PC-3 (cell line): ENCODE measurements at regions of chr11 and their contacts with region 1.

Region 1: GRCh38 chr11:33065445-33066178 is 26.2 kb downstream of the TCP11L1 start:
- DNase-seq: peak; percentile 66
- ATAC-seq: peak; percentile 88
- H3K4me3 ChIP-seq: no peak overlapping the region
- H3K27ac ChIP-seq: no peak overlapping the region
- H3K4me1 ChIP-seq: peaks cover 11% of the 10 kb centered on the region
- H3K27me3 ChIP-seq: no peaks in the 10 kb centered on the region
- CTCF ChIP-seq: peak; percentile 84

Region 2: GRCh38 chr11:32796425-32796824 is 269.2 kb before region 1 on chr11:
- CTCF ChIA-PET with region 1: no interaction called
- POLR2A ChIA-PET with region 1: no interaction called
- intact Hi-C with region 1: no loop called
- DNase-seq: peak; percentile 23
- ATAC-seq: no peak
- H3K4me3 ChIP-seq: no peak overlapping the region
- H3K27ac ChIP-seq: no peak overlapping the region
- H3K4me1 ChIP-seq: peaks cover 15% of the 10 kb centered on the region
- H3K27me3 ChIP-seq: no peaks in the 10 kb centered on the region
- CTCF ChIP-seq: no peak

Region 3: GRCh38 chr11:32893343-32894148 is 172.1 kb before region 1 on chr11:
- CTCF ChIA-PET with region 1: no interaction called
- POLR2A ChIA-PET with region 1: interaction called, 4 read pairs
- intact Hi-C with region 1: loop called (anchors 10 kb)
- DNase-seq: peak; percentile 32
- ATAC-seq: peak; percentile 37
- H3K4me3 ChIP-seq: peak overlapping the region; percentile 80
- H3K27ac ChIP-seq: peak overlapping the region; percentile 64
- H3K4me1 ChIP-seq: peaks cover 28% of the 10 kb centered on the region
- H3K27me3 ChIP-seq: no peaks in the 10 kb centered on the region
- CTCF ChIP-seq: peak; percentile 57

Region 4: DNA sequence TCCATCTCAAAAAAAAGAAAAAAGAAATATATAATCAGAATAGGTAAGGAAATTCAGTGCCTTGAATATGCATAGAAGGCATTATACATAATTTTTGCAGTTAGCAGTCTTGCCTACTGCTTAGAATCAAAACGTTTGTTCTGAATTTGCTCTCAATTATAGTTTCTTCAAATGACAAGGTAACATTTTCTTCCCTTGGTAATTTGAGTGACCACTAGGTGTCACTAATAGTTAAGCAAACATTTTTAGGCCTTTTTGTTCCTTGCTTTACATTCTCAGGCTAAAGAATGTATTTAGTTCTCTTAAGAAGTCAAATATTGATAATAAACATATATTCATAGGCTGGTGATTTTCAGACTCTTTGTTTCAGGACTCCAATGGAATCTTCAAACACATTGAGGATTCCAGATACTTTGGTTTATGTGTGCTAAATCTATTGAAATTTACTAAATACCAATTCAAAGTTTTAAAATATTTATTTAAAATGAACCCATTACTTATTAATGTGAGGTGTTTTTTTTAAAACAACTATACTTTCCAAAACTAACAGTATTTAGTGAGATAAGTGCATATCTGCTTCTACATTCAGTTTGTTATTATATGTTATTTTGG is 105.0 kb before region 1 on chr11:
- CTCF ChIA-PET with region 1: interaction called, 3 read pairs
- POLR2A ChIA-PET with region 1: no interaction called
- intact Hi-C with region 1: loop called (anchors 1 kb)
- DNase-seq: peak; percentile 69
- ATAC-seq: 0 out of 2 replicates have a peak, but pooled peaks have one; percentile 38
- H3K4me3 ChIP-seq: no peak overlapping the region
- H3K27ac ChIP-seq: no peak overlapping the region
- H3K4me1 ChIP-seq: no peaks in the 10 kb centered on the region
- H3K27me3 ChIP-seq: no peaks in the 10 kb centered on the region
- CTCF ChIP-seq: peak; percentile 73

Region 5: GRCh38 chr11:33227578-33228262 is 162.1 kb after region 1 on chr11:
- CTCF ChIA-PET with region 1: no interaction called
- POLR2A ChIA-PET with region 1: no interaction called
- intact Hi-C with region 1: no loop called
- DNase-seq: peak; percentile 3
- ATAC-seq: no peak
- H3K4me3 ChIP-seq: no peak overlapping the region
- H3K27ac ChIP-seq: no peak overlapping the region
- H3K4me1 ChIP-seq: no peaks in the 10 kb centered on the region
- H3K27me3 ChIP-seq: no peaks in the 10 kb centered on the region
- CTCF ChIP-seq: no peak